Naive thymus-derived CD4-positive, alpha-beta T cell (primary cell): ENCODE measurements at regions of chr16 and their contacts with region 1.

Region 1: GRCh38 chr16:30997000-30997886 is 12.2 kb downstream of the HSD3B7 start:
- DNase-seq: peak; percentile 45 to 80 (median 66)
- ATAC-seq: peak; percentile 99
- H3K4me3 ChIP-seq: peak overlapping the region; percentile 78
- H3K4me3 Mint-ChIP-seq: peak overlapping the region; percentile 66 to 90 (median 82)
- H3K27ac ChIP-seq: peak overlapping the region; percentile 61
- H3K27ac Mint-ChIP-seq: peak overlapping the region in 7 of 9 donors; percentile 58 to 87 (median 74)
- H3K4me1 ChIP-seq: peaks cover 5 to 11% of the 10 kb centered on the region in 2 donors
- H3K4me1 Mint-ChIP-seq: peaks cover 0 to 9% (median 6%) of the 10 kb centered on the region in 7 donors
- H3K27me3 ChIP-seq: no peaks in the 10 kb centered on the region
- H3K27me3 Mint-ChIP-seq: peaks cover 0 to 3% (median 0%) of the 10 kb centered on the region in 5 donors

Region 2: GRCh38 chr16:31010585-31011325 is 13.5 kb after region 1 on chr16 and contains the start of gene STX1B:
- CTCF ChIA-PET with region 1: no interaction called
- POLR2A ChIA-PET with region 1: no interaction called
- intact Hi-C with region 1: loop called in 1 of 2 experiments (anchors 1 kb)
- DNase-seq: peak; percentile 35 to 72 (median 53)
- ATAC-seq: peak; percentile 84
- H3K4me3 ChIP-seq: peak within 1 kb of the TSS; percentile 55
- H3K4me3 Mint-ChIP-seq: peak within 1 kb of the TSS; percentile 67 to 91 (median 81)
- H3K27ac ChIP-seq: peak within 1 kb of the TSS; percentile 39
- H3K27ac Mint-ChIP-seq: peak within 1 kb of the TSS in 8 of 9 donors; percentile 29 to 83 (median 58)
- H3K4me1 ChIP-seq: peaks cover 3 to 6% of the 10 kb centered on the region in 2 donors
- H3K4me1 Mint-ChIP-seq: peaks cover 13 to 29% (median 20%) of the 10 kb centered on the region in 7 donors
- H3K27me3 ChIP-seq: no peaks in the 10 kb centered on the region
- H3K27me3 Mint-ChIP-seq: peaks cover 0 to 64% (median 22%) of the 10 kb centered on the region in 5 donors
- total RNA-seq, gene STX1B: 1.7 to 5.2 (median 4.2) TPM

Region 3: GRCh38 chr16:31025339-31025738 is 28.1 kb after region 1 on chr16:
- CTCF ChIA-PET with region 1: no interaction called
- POLR2A ChIA-PET with region 1: no interaction called
- intact Hi-C with region 1: no loop called
- DNase-seq: no peak
- ATAC-seq: no peak
- H3K4me3 ChIP-seq: no peak overlapping the region
- H3K4me3 Mint-ChIP-seq: no peak overlapping the region
- H3K27ac ChIP-seq: no peak overlapping the region
- H3K27ac Mint-ChIP-seq: peak overlapping the region in 1 of 9 donors; percentile 38
- H3K4me1 ChIP-seq: no peaks in the 10 kb centered on the region
- H3K4me1 Mint-ChIP-seq: peaks cover 0 to 10% (median 0%) of the 10 kb centered on the region in 7 donors
- H3K27me3 ChIP-seq: no peaks in the 10 kb centered on the region
- H3K27me3 Mint-ChIP-seq: no peaks in the 10 kb centered on the region